ENCODE measurements at regions of chr13 and their contacts with region 1.

Region 1: GRCh38 chr13:36346222-36347083 is at the start of gene SPART:
- DNase-seq: peak; percentile 90
- CTCF ChIP-seq: peak; percentile 93

Region 2: GRCh38 chr13:36358175-36358718 is 11.8 kb after region 1 on chr13:
- CTCF ChIA-PET with region 1: interaction called, 10 read pairs
- POLR2A ChIA-PET with region 1: no interaction called
- DNase-seq: no peak
- CTCF ChIP-seq: no peak

Region 3: DNA sequence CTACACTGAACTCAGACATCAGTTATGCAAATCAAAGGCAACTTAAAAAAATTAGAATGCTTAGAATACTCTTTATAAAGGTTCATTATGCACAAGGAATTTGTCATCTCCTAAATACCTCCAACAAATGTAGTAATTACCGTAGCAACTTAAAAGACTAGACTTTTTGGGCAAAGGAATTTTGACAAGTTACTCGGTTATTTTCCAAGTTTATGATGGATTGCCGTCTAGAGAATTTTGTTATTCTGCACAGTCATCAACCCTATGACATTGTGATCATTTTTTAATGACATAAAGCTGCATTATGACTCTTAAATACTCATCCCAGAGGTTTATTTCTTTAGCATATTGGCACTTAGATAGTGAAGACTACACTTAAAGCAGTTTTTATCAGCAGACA is 1451.2 kb after region 1 on chr13:
- CTCF ChIA-PET with region 1: no interaction called
- POLR2A ChIA-PET with region 1: no interaction called
- DNase-seq: no peak
- CTCF ChIP-seq: no peak

Measured in GM10248 (cell line).